ENCODE measurements at regions of chr9 and their contacts with region 1.

Region 1: DNA sequence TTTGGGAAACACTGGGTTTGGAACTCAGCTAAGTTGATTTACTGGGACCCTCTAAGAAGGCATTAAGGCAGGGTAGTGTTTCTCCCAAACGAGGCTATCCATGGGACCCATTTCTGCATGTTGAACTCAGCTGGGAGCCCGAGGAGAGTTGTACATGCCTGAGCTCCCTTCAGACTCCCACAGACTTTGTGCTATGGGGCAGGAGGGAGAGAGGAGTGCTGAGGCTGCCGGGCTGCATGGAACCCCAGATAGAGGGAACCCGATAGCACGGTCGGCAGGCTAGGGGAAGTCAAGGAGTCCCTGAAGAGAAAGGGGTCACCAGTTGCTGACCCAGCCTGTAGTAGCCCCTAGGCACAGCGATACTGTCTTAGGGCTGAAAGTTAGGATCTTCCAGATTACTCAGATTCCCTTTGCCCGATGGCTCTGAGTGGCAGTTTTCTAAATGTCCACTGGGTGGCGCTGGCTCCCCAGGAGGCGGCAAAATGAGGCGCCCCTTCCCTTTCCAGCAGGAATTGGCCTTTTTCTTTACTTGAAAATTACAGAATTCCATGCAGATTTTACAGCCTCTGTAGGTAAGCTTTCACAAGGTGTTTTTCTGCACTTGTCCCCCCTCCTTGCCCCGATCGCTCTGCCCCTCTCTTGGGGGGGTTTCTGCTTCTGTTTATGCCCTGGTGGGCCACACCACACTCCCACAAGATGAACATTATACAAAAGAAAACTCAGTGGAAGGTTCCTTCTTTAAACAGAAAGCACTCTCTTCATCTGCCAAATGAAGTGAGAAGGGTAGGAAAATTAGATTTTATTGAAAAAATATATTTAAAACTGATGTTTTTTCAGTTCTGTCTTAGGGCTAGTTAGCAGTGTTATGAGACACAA is 17.8 kb downstream of the NANS start:
- DNase-seq: peak; percentile 60 to 72 (median 62)
- H3K4me3 ChIP-seq: no peak overlapping the region
- H3K4me3 Mint-ChIP-seq: peak overlapping the region; percentile 52 to 89 (median 71)
- H3K27ac ChIP-seq: peak overlapping the region; percentile 67
- H3K27ac Mint-ChIP-seq: peak overlapping the region; percentile 92 to 98 (median 96)
- H3K4me1 ChIP-seq: peaks cover 31% of the 10 kb centered on the region
- H3K4me1 Mint-ChIP-seq: peaks cover 24 to 43% (median 29%) of the 10 kb centered on the region in 4 donors
- H3K27me3 ChIP-seq: no peaks in the 10 kb centered on the region
- H3K27me3 Mint-ChIP-seq: no peaks in the 10 kb centered on the region

Region 2: GRCh38 chr9:98056269-98057137 is 17.9 kb before region 1 on chr9 and contains the start of gene NANS:
- CTCF ChIA-PET with region 1: interaction called, 6 read pairs
- POLR2A ChIA-PET with region 1: interaction called, 12 read pairs
- intact Hi-C with region 1: no loop called
- DNase-seq: peak; percentile 88 to 94 (median 90)
- H3K4me3 ChIP-seq: peak within 1 kb of the TSS; percentile 56 to 76
- H3K4me3 Mint-ChIP-seq: peak within 1 kb of the TSS; percentile 96 to 100 (median 99)
- H3K27ac ChIP-seq: peak within 1 kb of the TSS; percentile 82
- H3K27ac Mint-ChIP-seq: peak within 1 kb of the TSS; percentile 90 to 99 (median 99)
- H3K4me1 ChIP-seq: peaks cover 22% of the 10 kb centered on the region
- H3K4me1 Mint-ChIP-seq: peaks cover 12 to 32% (median 22%) of the 10 kb centered on the region in 4 donors
- H3K27me3 ChIP-seq: no peaks in the 10 kb centered on the region
- H3K27me3 Mint-ChIP-seq: no peaks in the 10 kb centered on the region
- total RNA-seq, gene NANS: 22.1 to 23.2 TPM

Region 3: DNA sequence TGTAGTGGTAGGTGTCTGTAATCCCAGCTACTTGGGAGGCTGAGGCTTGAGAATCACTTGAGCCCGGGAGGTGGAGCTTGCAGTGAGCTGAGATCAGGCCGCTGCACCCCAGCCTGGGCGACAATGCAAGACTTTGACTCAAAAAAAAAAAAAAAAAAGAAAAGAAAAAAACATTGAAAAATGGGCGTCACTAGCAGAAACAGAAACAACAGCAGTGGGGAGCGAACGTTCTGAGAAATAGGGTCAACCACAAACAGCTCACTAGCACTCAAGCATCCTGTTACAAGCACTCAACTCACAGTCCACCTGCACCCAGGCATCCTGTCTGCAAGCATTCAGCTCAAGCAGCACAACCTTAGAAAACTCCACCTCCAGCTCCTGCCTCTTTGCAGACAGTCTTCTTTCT is 27.5 kb after region 1 on chr9:
- CTCF ChIA-PET with region 1: interaction called, 23 read pairs
- POLR2A ChIA-PET with region 1: interaction called, 13 read pairs
- intact Hi-C with region 1: loop called (anchors 1 kb)
- DNase-seq: peak; percentile 85 to 95 (median 94)
- H3K4me3 ChIP-seq: peak overlapping the region in 1 of 2 donors; percentile 40
- H3K4me3 Mint-ChIP-seq: peak overlapping the region; percentile 67 to 85 (median 78)
- H3K27ac ChIP-seq: peak overlapping the region; percentile 64
- H3K27ac Mint-ChIP-seq: peak overlapping the region; percentile 91 to 98 (median 94)
- H3K4me1 ChIP-seq: peaks cover 99% of the 10 kb centered on the region
- H3K4me1 Mint-ChIP-seq: peaks cover 58 to 94% (median 77%) of the 10 kb centered on the region in 4 donors
- H3K27me3 ChIP-seq: no peaks in the 10 kb centered on the region
- H3K27me3 Mint-ChIP-seq: no peaks in the 10 kb centered on the region

Region 4: DNA sequence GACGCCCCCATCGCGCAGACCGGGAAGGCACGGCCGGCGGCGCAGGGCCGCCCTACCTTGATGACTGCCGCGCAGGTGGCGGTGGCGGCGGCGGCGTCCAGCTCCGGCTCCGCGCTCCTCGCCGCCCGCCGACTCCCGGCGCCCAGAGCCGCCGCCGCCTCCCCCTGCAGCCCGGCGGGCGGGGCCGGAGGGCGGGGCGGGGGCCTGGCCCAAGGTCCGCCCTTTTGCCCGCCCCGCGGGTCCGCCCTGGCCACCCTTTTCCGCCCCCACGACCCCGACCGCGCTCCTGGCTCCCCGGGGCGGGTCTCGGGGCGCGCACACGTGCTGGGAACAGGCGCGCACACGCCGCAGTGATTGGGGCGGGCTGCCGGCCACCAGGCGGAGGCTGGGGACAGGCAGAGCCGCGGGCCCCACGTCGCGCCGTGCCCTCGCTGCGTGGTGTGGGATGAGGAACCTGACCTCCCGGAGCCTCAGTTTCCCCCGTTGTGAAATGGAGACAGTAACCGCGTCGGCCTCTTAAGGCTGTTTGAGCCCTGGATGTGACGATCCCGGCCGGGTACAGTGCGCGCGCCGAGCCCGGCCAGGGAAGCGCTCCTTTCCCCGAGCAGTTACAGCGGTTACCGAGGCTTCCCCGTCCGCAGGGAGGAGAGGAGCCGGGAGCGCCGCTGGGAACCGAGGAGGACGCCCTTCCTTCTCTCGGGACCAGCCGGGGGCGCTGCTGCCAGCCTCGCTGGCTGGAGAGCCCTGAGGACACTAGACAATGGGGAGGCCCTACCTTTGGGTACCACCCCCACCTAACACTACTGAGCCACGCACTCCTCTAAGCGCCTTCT is 118.4 kb after region 1 on chr9 and contains the start of gene CORO2A:
- CTCF ChIA-PET with region 1: interaction called, 21 read pairs
- POLR2A ChIA-PET with region 1: interaction called, 4 read pairs
- intact Hi-C with region 1: loop called (anchors 1 kb)
- DNase-seq: peak; percentile 64 to 72 (median 70)
- H3K4me3 ChIP-seq: peak within 1 kb of the TSS; percentile 52 to 67
- H3K4me3 Mint-ChIP-seq: peak within 1 kb of the TSS; percentile 83 to 95 (median 91)
- H3K27ac ChIP-seq: peak within 1 kb of the TSS; percentile 53
- H3K27ac Mint-ChIP-seq: peak within 1 kb of the TSS; percentile 63 to 91 (median 85)
- H3K4me1 ChIP-seq: peaks cover 44% of the 10 kb centered on the region
- H3K4me1 Mint-ChIP-seq: peaks cover 16 to 50% (median 37%) of the 10 kb centered on the region in 4 donors
- H3K27me3 ChIP-seq: no peaks in the 10 kb centered on the region
- H3K27me3 Mint-ChIP-seq: no peaks in the 10 kb centered on the region
- total RNA-seq, gene CORO2A: 8.3 to 8.6 TPM

Region 5: DNA sequence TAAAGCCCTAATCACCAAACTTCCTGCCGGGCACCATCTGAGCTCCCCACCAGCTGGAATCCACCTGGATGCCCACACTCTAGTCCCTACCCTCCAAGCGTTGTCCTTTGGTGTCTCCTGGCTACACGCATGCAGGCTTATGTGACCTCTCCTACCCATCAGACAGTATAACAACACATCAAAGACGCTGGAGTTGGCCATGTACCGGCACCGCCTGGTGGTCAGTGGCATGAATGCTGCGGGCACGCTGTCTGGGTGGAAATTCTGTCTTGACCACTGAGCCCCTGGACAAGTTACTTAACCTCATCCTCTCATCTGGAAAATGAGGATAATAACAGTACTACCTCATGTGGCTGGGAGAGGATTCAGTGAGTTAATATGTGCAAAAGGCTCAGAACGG is 141.5 kb after region 1 on chr9:
- CTCF ChIA-PET with region 1: interaction called, 3 read pairs
- POLR2A ChIA-PET with region 1: interaction called, 3 read pairs
- intact Hi-C with region 1: loop called (anchors 1 kb)
- DNase-seq: no peak
- H3K4me3 ChIP-seq: no peak overlapping the region
- H3K4me3 Mint-ChIP-seq: no peak overlapping the region
- H3K27ac ChIP-seq: no peak overlapping the region
- H3K27ac Mint-ChIP-seq: peak overlapping the region in 2 of 7 donors; percentile 24 to 78
- H3K4me1 ChIP-seq: no peaks in the 10 kb centered on the region
- H3K4me1 Mint-ChIP-seq: peaks cover 0 to 3% (median 0%) of the 10 kb centered on the region in 4 donors
- H3K27me3 ChIP-seq: no peaks in the 10 kb centered on the region
- H3K27me3 Mint-ChIP-seq: no peaks in the 10 kb centered on the region

Region 6: DNA sequence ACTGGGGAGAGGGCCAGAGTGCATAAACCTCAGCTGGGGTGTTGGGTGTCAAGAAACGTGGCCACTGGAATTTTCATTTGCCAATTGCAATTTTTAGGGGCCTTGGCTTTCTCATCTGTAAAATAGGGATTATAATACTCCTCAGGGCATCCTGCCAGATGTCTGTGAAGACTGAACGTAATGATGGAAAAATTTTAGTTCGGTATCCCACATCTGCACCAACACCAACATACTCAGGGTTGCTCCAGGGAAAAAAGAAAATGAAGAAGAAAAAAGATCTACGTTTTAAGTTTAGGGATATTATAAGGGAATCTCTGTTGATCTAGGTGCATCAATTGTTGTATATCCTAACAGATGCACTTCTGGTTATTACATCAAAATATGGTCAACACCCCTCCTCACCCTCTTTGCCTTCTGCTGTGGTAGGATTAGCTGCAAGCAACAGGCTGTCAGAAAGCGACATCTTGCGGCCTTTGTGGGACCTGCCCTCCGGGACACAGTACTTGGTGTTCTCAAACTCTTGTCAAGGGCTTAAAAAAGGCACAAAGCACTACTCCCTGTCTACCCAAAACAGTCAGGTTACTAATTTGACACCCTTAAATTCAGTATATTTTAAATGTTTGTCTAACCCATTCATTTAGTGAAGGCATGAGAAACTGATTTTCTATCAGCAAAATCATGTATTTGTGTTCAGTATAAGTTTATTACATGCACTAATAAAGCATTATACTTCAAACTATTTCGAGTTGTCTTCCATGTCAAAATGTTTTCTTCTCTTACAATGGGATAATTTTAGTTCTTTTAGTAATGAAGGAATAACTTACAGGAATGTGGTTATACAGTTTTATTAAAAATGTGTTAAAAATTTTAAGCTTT is 189.4 kb after region 1 on chr9:
- CTCF ChIA-PET with region 1: interaction called, 43 read pairs
- POLR2A ChIA-PET with region 1: interaction called, 5 read pairs
- intact Hi-C with region 1: loop called (anchors 1 kb)
- DNase-seq: peak; percentile 78 to 84 (median 80)
- H3K4me3 ChIP-seq: no peak overlapping the region
- H3K4me3 Mint-ChIP-seq: no peak overlapping the region
- H3K27ac ChIP-seq: no peak overlapping the region
- H3K27ac Mint-ChIP-seq: peak overlapping the region in 2 of 7 donors; percentile 31 to 63
- H3K4me1 ChIP-seq: no peaks in the 10 kb centered on the region
- H3K4me1 Mint-ChIP-seq: peaks cover 0 to 5% (median 3%) of the 10 kb centered on the region in 4 donors
- H3K27me3 ChIP-seq: no peaks in the 10 kb centered on the region
- H3K27me3 Mint-ChIP-seq: peaks cover 0 to 6% of the 10 kb centered on the region in 2 donors

Measured in CD4-positive, alpha-beta memory T cell (primary cell).